ENCODE measurements at regions of chr3 and their contacts with region 1.

Region 1: GRCh38 chr3:156899951-156900350 is 73.8 kb downstream of the LEKR1 start:
- DNase-seq: no peak
- CTCF ChIP-seq: no peak

Region 2: DNA sequence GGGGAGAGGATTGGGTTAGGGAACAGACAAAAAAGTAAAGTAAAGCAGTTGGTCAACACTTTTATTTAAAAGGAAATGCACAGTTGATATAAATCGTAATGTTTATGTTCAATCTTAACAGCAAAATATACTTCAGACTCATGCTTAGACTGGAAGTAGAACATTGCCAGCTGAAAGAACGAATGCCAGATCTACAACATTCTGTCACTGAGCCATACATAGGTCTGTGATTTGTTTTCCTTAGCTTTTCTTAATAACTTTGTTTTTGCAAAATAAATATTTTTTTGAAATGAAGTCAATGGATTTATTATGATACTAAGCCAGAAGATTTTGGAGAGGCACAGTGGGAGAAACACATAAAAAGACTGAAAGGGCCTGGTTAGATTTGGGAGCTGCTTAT is 11.8 kb before region 1 on chr3:
- CTCF ChIA-PET with region 1: interaction called, 14 read pairs
- POLR2A ChIA-PET with region 1: no interaction called
- DNase-seq: no peak
- CTCF ChIP-seq: no peak

Region 3: DNA sequence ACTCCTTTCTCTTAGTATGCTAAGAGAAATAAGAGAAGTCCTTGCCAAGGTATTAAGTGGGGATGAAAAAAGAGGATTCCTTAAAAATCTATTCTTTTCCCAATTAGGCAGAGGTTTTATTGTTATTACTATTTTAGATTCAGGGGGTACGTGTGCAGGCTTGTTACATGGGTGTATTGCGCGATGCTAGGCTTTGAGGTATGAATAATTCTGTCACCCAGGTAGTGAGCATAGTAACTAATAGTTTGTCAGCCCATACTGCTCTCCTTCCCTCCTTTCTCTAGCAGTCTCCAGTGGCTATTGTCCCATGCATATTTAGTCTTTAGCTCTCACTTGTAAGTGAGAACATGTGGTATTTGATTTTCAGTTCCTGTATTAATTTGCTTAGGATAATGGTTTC is 10.1 kb after region 1 on chr3:
- CTCF ChIA-PET with region 1: interaction called, 10 read pairs
- POLR2A ChIA-PET with region 1: no interaction called
- DNase-seq: no peak
- CTCF ChIP-seq: no peak